ENCODE measurements at regions of chr12 and their contacts with region 1.

Region 1: GRCh38 chr12:106986625-106987430 is at the start of gene MTERF2:
- DNase-seq: peak; percentile 97
- H3K4me3 ChIP-seq: peak within 1 kb of the TSS; percentile 70 to 76 (median 73)
- H3K27ac ChIP-seq: peak within 1 kb of the TSS; percentile 92 to 96 (median 94)
- H3K4me1 ChIP-seq: peaks cover 0 to 32% (median 19%) of the 10 kb centered on the region in 4 donors
- H3K27me3 ChIP-seq: no peaks in the 10 kb centered on the region
- CTCF ChIP-seq: no peak
- EP300 ChIP-seq: no peak
- POLR2A ChIP-seq: peak; percentile 60 to 63
- total RNA-seq, gene MTERF2: 15.8 to 31.1 (median 21.3) TPM

Region 2: GRCh38 chr12:106955377-106956047 is 31.3 kb before region 1 on chr12 and contains the start of gene TMEM263:
- intact Hi-C with region 1: loop called (anchors 2 kb)
- DNase-seq: peak; percentile 98
- H3K4me3 ChIP-seq: peak within 1 kb of the TSS; percentile 72 to 97 (median 95)
- H3K27ac ChIP-seq: peak within 1 kb of the TSS; percentile 99 to 100 (median 100)
- H3K4me1 ChIP-seq: peaks cover 0 to 45% (median 39%) of the 10 kb centered on the region in 4 donors
- H3K27me3 ChIP-seq: no peaks in the 10 kb centered on the region
- CTCF ChIP-seq: no peak
- EP300 ChIP-seq: no peak
- POLR2A ChIP-seq: peak in 1 of 2 donors; percentile 46
- total RNA-seq, gene TMEM263: 39.5 to 51.7 (median 46.4) TPM

Region 3: GRCh38 chr12:107027636-107028053 is 40.8 kb after region 1 on chr12:
- intact Hi-C with region 1: loop called (anchors 2 kb)
- DNase-seq: no peak
- H3K4me3 ChIP-seq: no peak overlapping the region
- H3K27ac ChIP-seq: peak overlapping the region; percentile 66 to 83 (median 82)
- H3K4me1 ChIP-seq: peaks cover 0 to 59% (median 37%) of the 10 kb centered on the region in 4 donors
- H3K27me3 ChIP-seq: no peaks in the 10 kb centered on the region
- CTCF ChIP-seq: no peak
- EP300 ChIP-seq: peak; percentile 33 to 92 (median 80)
- POLR2A ChIP-seq: no peak

Region 4: GRCh38 chr12:107109741-107110719 is 123.2 kb after region 1 on chr12:
- intact Hi-C with region 1: no loop called
- DNase-seq: no peak
- H3K4me3 ChIP-seq: peak overlapping the region in 2 of 4 donors; percentile 10 to 11
- H3K27ac ChIP-seq: peak overlapping the region in 2 of 4 donors; percentile 16 to 55
- H3K4me1 ChIP-seq: peaks cover 0 to 12% (median 3%) of the 10 kb centered on the region in 4 donors
- H3K27me3 ChIP-seq: no peaks in the 10 kb centered on the region
- CTCF ChIP-seq: no peak
- EP300 ChIP-seq: no peak
- POLR2A ChIP-seq: no peak